Endothelial cell of umbilical vein (primary cell): ENCODE measurements at regions of chr12 and their contacts with region 1.

Region 1: DNA sequence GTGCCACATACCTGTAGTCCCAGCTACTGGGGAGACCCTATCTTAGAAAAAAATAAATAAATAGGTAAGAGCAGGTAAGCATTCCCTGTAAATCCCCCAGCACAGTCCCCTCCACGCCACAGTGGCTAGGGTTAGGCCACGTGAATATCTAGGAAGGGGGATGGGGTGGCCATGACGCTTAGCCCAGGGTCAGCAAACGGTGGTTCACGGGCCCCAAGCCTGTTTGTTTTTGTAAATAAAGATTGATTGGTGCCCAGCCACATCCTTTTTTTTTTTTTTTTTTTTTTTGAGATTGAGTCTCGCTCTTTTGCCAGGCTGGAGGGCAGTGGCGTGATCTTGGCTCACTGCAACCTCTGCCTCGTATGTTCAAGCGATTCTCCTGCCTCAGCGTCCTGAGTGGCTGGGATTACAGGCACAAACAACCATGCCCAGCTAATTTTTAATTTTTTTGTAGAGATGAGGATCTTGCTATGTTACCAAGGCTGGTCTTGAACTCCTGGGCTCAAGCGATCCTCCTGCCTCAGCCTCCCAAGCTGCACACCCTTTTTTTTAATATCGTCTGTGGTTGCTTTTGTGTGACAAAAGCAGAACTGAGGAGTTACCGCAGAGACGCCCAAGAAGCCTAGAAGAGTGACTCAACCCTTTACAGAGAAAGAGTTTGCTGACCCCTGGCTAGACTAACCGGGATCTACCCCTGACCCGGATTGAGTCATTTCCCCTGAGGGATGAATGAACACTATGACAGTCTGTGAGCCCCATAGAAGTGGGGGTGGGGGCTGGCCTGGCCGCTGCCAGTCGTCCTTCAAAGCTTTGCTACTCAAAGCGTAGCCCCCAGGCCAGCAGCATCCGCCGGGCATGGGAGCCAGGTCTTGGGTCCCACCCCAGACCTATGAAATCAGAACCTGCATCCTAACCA is 113.7 kb upstream of the NCOR2 start:
- DNase-seq: peak; percentile 94
- H3K4me3 ChIP-seq: no peak overlapping the region
- H3K27ac ChIP-seq: peak overlapping the region; percentile 98
- H3K4me1 ChIP-seq: peaks cover 41% of the 10 kb centered on the region
- H3K27me3 ChIP-seq: no peaks in the 10 kb centered on the region
- CTCF ChIP-seq: peak; percentile 28 to 39
- POLR2A ChIP-seq: peak; percentile 54

Region 2: GRCh38 chr12:124379938-124380754 is 301.0 kb before region 1 on chr12:
- CTCF ChIA-PET with region 1: no interaction called
- POLR2A ChIA-PET with region 1: no interaction called
- dilution Hi-C with region 1: no loop called
- intact Hi-C with region 1: loop called (anchors 2 kb)
- DNase-seq: peak; percentile 93
- H3K4me3 ChIP-seq: no peak overlapping the region
- H3K27ac ChIP-seq: peak overlapping the region; percentile 93
- H3K4me1 ChIP-seq: peaks cover 62% of the 10 kb centered on the region
- H3K27me3 ChIP-seq: no peaks in the 10 kb centered on the region
- CTCF ChIP-seq: peak; percentile 43 to 54
- POLR2A ChIP-seq: peak; percentile 80

Region 3: GRCh38 chr12:124518051-124518932 is 162.8 kb before region 1 on chr12:
- CTCF ChIA-PET with region 1: interaction called, 3 read pairs
- POLR2A ChIA-PET with region 1: no interaction called
- dilution Hi-C with region 1: no loop called
- intact Hi-C with region 1: loop called (anchors 1 kb)
- DNase-seq: peak; percentile 99
- H3K4me3 ChIP-seq: peak overlapping the region in 1 of 3 experiments; percentile 19
- H3K27ac ChIP-seq: peak overlapping the region; percentile 91
- H3K4me1 ChIP-seq: peaks cover 64% of the 10 kb centered on the region
- H3K27me3 ChIP-seq: no peaks in the 10 kb centered on the region
- CTCF ChIP-seq: no peak
- POLR2A ChIP-seq: no peak

Region 4: DNA sequence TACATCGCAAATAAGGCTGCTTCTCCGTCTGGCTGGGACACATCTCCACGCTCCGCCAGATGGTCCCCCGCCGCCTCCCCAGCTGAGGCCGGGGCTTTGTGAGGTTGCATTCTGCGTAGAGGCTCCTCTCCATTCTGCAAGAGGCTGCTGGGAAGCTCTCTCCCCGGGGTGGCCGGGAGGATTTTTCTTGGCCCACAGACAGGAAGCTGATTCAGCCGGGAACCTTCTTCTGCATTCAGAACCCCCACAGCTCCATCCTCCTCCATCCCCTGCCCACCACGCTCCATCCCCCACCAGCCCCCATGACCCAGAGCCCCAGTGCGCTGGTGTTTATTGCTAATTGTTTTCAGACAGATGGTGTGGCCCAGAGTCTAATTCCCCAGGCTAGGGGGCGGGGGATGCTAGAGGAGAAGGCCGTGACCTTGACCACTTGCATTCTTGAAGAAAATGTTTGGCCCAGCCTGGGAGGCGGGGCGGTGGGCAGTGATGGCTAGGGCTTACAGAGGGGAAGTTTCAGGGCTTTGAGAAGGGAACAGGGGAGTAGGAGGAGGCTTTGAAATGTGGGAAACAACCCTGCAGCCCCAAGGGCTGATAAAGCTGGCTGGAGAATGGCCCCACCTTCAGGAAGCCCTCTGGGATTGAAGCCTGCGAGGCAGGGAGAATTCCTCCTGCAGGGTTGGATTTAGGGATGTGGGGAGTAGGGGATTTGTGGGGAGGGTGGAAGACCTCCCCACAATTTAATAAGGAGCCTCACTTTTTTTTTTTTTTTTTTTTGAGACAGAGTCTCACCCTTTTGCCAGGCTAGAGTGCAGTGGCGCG is 25.2 kb before region 1 on chr12:
- CTCF ChIA-PET with region 1: interaction called, 8 read pairs
- POLR2A ChIA-PET with region 1: no interaction called
- dilution Hi-C with region 1: no loop called
- intact Hi-C with region 1: loop called (anchors 1 kb)
- DNase-seq: peak; percentile 87
- H3K4me3 ChIP-seq: no peak overlapping the region
- H3K27ac ChIP-seq: peak overlapping the region; percentile 91
- H3K4me1 ChIP-seq: peaks cover 51% of the 10 kb centered on the region
- H3K27me3 ChIP-seq: no peaks in the 10 kb centered on the region
- CTCF ChIP-seq: no peak
- POLR2A ChIP-seq: no peak

Region 5: GRCh38 chr12:124720004-124720680 is 39.0 kb after region 1 on chr12:
- CTCF ChIA-PET with region 1: interaction called, 9 read pairs
- POLR2A ChIA-PET with region 1: no interaction called
- dilution Hi-C with region 1: no loop called
- intact Hi-C with region 1: loop called (anchors 2 kb)
- DNase-seq: peak; percentile 72
- H3K4me3 ChIP-seq: no peak overlapping the region
- H3K27ac ChIP-seq: peak overlapping the region; percentile 80
- H3K4me1 ChIP-seq: peaks cover 27% of the 10 kb centered on the region
- H3K27me3 ChIP-seq: no peaks in the 10 kb centered on the region
- CTCF ChIP-seq: peak; percentile 20 to 38
- POLR2A ChIP-seq: no peak

Region 6: DNA sequence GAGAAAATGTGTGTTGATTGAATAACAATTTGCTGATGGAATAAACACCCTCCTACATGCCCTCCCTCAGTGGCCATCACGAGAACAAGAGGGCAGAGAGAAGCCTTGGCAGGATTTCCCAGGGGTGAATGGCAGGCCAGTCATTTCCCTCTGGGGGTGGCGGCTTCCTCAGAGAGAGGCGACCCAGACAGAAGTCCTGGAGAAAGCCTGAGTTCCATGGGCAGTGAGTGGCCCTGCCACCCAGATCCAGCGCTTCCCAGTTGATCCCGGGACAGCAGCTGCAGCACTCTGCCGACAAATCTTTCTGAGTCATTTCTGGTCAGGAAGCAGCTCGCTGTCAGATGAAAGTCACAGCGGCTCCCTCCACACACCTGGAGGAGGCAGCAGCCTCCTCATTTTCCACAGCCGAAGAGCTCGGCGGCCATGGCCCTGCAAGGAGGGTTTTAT is 59.6 kb after region 1 on chr12:
- CTCF ChIA-PET with region 1: no interaction called
- POLR2A ChIA-PET with region 1: no interaction called
- dilution Hi-C with region 1: loop called (anchors 10 kb)
- intact Hi-C with region 1: loop called (anchors 1 kb)
- DNase-seq: peak; percentile 87
- H3K4me3 ChIP-seq: no peak overlapping the region
- H3K27ac ChIP-seq: peak overlapping the region; percentile 88
- H3K4me1 ChIP-seq: peaks cover 42% of the 10 kb centered on the region
- H3K27me3 ChIP-seq: no peaks in the 10 kb centered on the region
- CTCF ChIP-seq: peak; percentile 7 to 13
- POLR2A ChIP-seq: no peak

Region 7: DNA sequence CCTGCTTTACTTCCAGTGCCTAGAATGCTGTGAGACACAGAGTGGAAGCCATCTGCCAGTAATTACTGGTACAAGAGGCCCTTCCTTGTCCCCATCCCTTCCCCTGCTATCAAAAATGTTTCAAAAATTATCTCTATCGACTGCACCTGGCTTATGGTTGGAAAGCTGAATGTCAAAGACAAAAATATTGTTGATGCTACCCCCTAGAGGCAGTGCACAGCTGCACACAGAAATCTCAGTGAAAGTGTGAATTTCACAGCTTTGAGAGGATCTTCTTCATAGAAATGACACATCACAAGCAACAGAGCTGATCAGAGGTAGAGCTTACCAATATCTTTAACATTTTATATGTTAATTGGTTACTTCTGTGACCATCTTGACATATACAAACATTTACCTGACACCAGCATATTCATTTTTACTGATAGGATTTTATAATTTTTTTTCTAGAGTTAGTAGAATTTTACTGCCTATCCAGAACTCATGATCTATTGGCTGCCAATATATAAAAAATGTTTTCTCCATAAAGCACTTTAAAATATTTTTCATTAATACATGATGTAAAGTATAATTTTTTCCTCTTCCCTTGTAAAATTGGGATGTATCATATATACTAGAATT is 522.1 kb after region 1 on chr12:
- CTCF ChIA-PET with region 1: no interaction called
- POLR2A ChIA-PET with region 1: no interaction called
- dilution Hi-C with region 1: no loop called
- intact Hi-C with region 1: no loop called
- DNase-seq: peak; percentile 8
- H3K4me3 ChIP-seq: no peak overlapping the region
- H3K27ac ChIP-seq: no peak overlapping the region
- H3K4me1 ChIP-seq: no peaks in the 10 kb centered on the region
- H3K27me3 ChIP-seq: no peaks in the 10 kb centered on the region
- CTCF ChIP-seq: peak; percentile 33 to 39
- POLR2A ChIP-seq: no peak